ENCODE measurements at regions of chr2 and their contacts with region 1.

Region 1: GRCh38 chr2:175097297-175097696 is 70.7 kb downstream of the ATF2 start:
- DNase-seq: no peak
- H3K4me3 ChIP-seq: no peak overlapping the region
- H3K27ac ChIP-seq: no peak overlapping the region
- H3K4me1 ChIP-seq: no peaks in the 10 kb centered on the region
- H3K27me3 ChIP-seq: no peaks in the 10 kb centered on the region
- CTCF ChIP-seq: no peak
- EP300 ChIP-seq: no peak
- POLR2A ChIP-seq: no peak

Region 2: DNA sequence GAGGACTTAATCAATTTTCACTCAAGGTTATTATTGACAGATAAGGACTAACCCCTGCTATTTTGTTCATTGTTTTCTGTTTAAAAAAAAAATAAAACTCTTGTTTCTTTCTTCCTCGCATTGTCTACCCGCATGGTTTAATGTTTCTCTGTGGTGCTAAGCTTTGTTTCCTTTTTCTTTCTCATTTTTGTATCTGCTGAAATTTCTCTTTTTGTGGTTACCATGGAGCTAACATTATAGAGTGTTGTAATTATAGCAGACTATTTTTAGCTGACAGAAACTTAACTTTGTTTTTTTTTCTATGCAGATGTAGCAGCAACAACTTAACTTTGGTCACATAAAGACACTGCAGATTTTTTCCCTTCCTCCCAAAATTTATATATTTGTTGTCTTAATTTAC is 49.0 kb before region 1 on chr2:
- in situ Hi-C with region 1: no loop called
- intact Hi-C with region 1: loop called (anchors 1 kb)
- DNase-seq: no peak
- H3K4me3 ChIP-seq: no peak overlapping the region
- H3K27ac ChIP-seq: no peak overlapping the region
- H3K4me1 ChIP-seq: no peaks in the 10 kb centered on the region
- H3K27me3 ChIP-seq: no peaks in the 10 kb centered on the region
- CTCF ChIP-seq: no peak
- EP300 ChIP-seq: no peak
- POLR2A ChIP-seq: no peak

Measured in transverse colon (tissue), 4 donors.